K562 (cell line): ENCODE measurements at regions of chr4 and their contacts with region 1.

Region 1: GRCh38 chr4:128471576-128471975 is 184.0 kb upstream of the PGRMC2 start:
- DNase-seq: peak; percentile 52 to 90 (median 76)
- ATAC-seq: peak; percentile 97
- H3K4me3 ChIP-seq: no peak overlapping the region
- H3K27ac ChIP-seq: peak overlapping the region; percentile 67
- H3K4me1 ChIP-seq: peaks cover 8 to 40% of the 10 kb centered on the region in 2 experiments
- H3K27me3 ChIP-seq: no peaks in the 10 kb centered on the region
- CTCF ChIP-seq: no peak
- EP300 ChIP-seq: peak; percentile 77; the same call in 1 of the 2 replicates
- POLR2A ChIP-seq: no peak
- RAD21 ChIP-seq: no peak

Region 2: GRCh38 chr4:128403586-128403985 is 68.0 kb before region 1 on chr4:
- CTCF ChIA-PET with region 1: no interaction called
- POLR2A ChIA-PET with region 1: no interaction called
- in situ Hi-C with region 1: no loop called
- intact Hi-C with region 1: no loop called
- DNase-seq: no peak
- ATAC-seq: no peak
- H3K4me3 ChIP-seq: no peak overlapping the region
- H3K27ac ChIP-seq: no peak overlapping the region
- H3K4me1 ChIP-seq: no peaks in the 10 kb centered on the region
- H3K27me3 ChIP-seq: no peaks in the 10 kb centered on the region
- CTCF ChIP-seq: no peak
- EP300 ChIP-seq: no peak
- POLR2A ChIP-seq: no peak
- RAD21 ChIP-seq: no peak

Region 3: GRCh38 chr4:128461291-128462102 is 10.1 kb before region 1 on chr4:
- CTCF ChIA-PET with region 1: no interaction called
- POLR2A ChIA-PET with region 1: interaction called, 10 read pairs
- in situ Hi-C with region 1: no loop called
- intact Hi-C with region 1: no loop called
- DNase-seq: peak; percentile 23 to 72 (median 40)
- ATAC-seq: peak; percentile 87
- H3K4me3 ChIP-seq: no peak overlapping the region
- H3K27ac ChIP-seq: peak overlapping the region; percentile 46; the same call in 2 of the 3 replicates
- H3K4me1 ChIP-seq: peaks cover 0 to 11% of the 10 kb centered on the region in 2 experiments; a peak in 2 of 5 replicates
- H3K27me3 ChIP-seq: no peaks in the 10 kb centered on the region
- CTCF ChIP-seq: no peak
- EP300 ChIP-seq: no peak
- POLR2A ChIP-seq: no peak
- RAD21 ChIP-seq: peak in 1 of 2 experiments; percentile 24; a peak in 3 of 4 replicates

Region 4: DNA sequence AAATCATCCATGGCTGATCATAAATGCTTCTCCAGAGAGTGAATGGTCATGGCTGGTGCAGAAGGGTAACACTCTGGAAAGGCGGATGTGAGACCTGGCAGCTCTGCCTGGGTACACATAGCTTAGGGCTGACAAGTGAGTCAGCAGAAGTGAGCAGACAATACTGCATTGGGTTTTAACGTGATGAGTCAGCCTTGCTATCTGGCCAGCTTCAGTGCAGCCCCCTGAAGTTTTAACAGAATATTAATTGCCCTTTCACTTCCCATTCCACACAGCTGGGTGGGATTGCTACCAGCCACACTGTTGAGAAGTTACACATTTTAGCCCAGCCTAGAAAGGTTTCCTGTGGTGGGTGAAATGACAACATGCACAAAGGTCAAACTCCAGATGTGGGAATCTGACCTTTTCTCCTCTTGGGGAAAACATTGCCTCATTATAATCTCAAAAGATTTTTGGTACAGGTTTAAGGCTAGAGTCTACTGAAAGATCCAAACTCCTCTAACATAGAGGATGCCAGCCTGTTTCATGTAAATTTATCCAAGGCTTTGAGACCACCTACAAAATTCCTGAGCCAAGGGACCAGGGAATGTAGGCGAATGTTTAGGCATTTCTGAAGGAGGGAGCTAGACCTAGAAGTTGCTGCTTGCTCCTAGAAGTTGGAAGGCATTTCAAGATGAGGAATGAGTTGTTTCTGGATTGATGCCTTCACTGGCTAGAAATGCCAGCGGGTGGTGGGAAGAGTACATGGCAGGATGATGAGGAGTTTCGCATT is 46.3 kb after region 1 on chr4:
- CTCF ChIA-PET with region 1: no interaction called
- POLR2A ChIA-PET with region 1: interaction called, 3 read pairs
- in situ Hi-C with region 1: no loop called
- intact Hi-C with region 1: loop called (anchors 1 kb)
- DNase-seq: peak; percentile 69 to 89 (median 78)
- ATAC-seq: peak; percentile 92
- H3K4me3 ChIP-seq: no peak overlapping the region
- H3K27ac ChIP-seq: peak overlapping the region; percentile 95
- H3K4me1 ChIP-seq: peaks cover 6 to 65% of the 10 kb centered on the region in 2 experiments
- H3K27me3 ChIP-seq: no peaks in the 10 kb centered on the region
- CTCF ChIP-seq: no peak
- EP300 ChIP-seq: peak; percentile 81
- POLR2A ChIP-seq: no peak
- RAD21 ChIP-seq: no peak; a peak in 2 of 4 replicates